Sigmoid colon (tissue), 7 donors: ENCODE measurements at regions of chr16 and their contacts with region 1.

Region 1: GRCh38 chr16:11851294-11852091 is at the start of gene RSL1D1:
- DNase-seq: peak; percentile 96
- H3K4me3 ChIP-seq: peak within 1 kb of the TSS; percentile 63 to 97 (median 94)
- H3K27ac ChIP-seq: peak within 1 kb of the TSS; percentile 82 to 94 (median 92)
- H3K4me1 ChIP-seq: peaks cover 0 to 45% (median 40%) of the 10 kb centered on the region in 4 donors
- H3K27me3 ChIP-seq: no peaks in the 10 kb centered on the region
- CTCF ChIP-seq: no peak
- EP300 ChIP-seq: peak in 1 of 4 donors; percentile 64
- POLR2A ChIP-seq: peak; percentile 83 to 87
- total RNA-seq, gene RSL1D1: 134 to 177 (median 148) TPM

Region 2: DNA sequence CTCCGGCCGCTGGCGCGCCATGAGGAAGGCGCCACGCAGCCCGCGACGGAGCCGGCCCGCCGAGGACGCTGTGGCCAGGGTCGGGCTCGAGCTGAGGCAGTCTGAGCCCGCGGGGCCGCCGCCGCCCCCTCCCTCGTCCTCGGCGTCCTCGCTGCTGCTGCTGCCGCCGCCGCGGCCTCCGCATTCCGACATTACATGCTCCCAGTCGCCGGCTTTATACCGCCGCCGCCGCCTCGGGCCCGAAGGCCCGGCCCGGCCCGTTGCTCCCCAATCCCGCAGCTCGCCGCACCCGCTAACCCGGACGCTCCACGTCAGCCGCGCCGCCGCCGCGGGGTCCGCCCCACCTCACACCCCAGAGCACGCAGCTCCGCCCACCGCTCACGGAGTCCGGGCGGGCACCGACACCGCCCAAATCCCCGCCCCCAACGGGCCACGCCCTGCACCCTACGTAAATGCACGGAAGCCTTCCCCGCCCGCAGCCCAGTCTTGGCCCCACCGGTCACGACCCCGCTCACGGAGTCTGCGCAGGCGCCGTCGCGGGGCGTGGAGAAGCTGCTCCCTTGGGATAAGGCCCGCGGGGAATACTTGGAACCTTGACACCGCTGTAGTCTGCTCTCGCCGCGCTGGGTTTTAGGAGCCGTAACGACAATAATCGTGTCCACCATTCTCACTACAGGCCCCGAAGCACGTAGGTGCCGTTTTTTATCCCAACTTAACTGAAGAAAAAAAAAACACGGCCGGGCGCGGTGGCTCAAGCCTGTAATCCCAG is 108.8 kb before region 1 on chr16 and contains the start of gene TXNDC11:
- intact Hi-C with region 1: loop called (anchors 2 kb)
- DNase-seq: peak; percentile 100
- H3K4me3 ChIP-seq: peak within 1 kb of the TSS; percentile 72 to 99 (median 92)
- H3K27ac ChIP-seq: peak within 1 kb of the TSS; percentile 96 to 100 (median 98)
- H3K4me1 ChIP-seq: peaks cover 0 to 41% (median 34%) of the 10 kb centered on the region in 4 donors
- H3K27me3 ChIP-seq: no peaks in the 10 kb centered on the region
- CTCF ChIP-seq: no peak
- EP300 ChIP-seq: peak in 2 of 4 donors; percentile 40 to 91
- POLR2A ChIP-seq: peak; percentile 65 to 74
- total RNA-seq, gene TXNDC11: 25.3 to 35.2 (median 28.8) TPM

Region 3: DNA sequence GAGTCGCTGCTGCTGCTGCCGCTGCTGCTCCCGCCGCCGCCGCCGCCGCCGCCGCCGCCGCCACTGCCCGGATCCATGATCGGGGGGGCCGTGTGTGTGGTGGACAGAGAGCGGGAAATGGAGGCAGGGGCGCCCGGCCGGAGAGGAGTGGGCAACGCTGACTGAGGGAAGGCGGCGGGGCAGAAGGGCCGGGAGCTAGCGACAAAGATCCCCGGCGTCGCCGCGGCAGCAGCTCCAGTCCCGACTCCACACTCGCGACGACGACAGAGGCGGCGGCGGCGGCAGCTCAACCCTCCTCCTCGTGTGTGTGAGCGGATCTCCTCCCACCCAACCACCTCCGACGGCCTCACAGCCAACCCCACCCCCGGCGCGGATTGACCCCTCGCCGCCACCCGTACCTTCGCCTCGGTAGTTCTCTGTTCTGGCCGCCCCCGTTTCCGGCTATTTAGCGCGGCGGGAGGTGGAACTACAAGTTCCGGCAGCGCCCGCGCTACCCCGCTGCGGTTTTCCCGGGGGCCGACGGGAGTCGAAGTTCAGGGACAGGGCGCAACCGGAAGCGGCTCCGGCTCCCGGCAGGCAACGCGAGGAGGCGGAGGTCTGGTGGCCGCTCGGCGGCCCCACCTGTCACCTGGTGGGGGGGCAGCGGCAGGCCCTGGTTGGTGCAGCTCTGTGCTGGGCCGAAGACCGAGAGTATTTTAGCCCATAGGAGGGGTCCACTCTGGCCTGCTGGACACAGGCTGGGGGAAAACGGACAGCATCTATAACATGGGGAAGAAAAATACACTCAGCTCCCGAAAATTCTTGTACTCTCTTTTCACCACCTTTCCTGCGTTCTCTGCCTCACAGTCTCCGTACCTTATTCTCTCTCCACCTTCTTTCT is 64.4 kb after region 1 on chr16 and contains the start of gene GSPT1:
- intact Hi-C with region 1: loop called (anchors 1 kb)
- DNase-seq: peak; percentile 99
- H3K4me3 ChIP-seq: peak within 1 kb of the TSS; percentile 71 to 98 (median 90)
- H3K27ac ChIP-seq: peak within 1 kb of the TSS; percentile 95 to 98 (median 97)
- H3K4me1 ChIP-seq: peaks cover 0 to 42% (median 41%) of the 10 kb centered on the region in 4 donors
- H3K27me3 ChIP-seq: no peaks in the 10 kb centered on the region
- CTCF ChIP-seq: peak in 2 of 4 experiments; percentile 15 to 35
- EP300 ChIP-seq: peak in 2 of 4 donors; percentile 53 to 79
- POLR2A ChIP-seq: peak; percentile 81 to 90
- total RNA-seq, gene GSPT1: 51.8 to 73.5 (median 52.3) TPM

Region 4: GRCh38 chr16:11977376-11978041 is 126.0 kb after region 1 on chr16:
- intact Hi-C with region 1: loop called (anchors 5 kb)
- DNase-seq: peak; percentile 80
- H3K4me3 ChIP-seq: peak overlapping the region; percentile 76 to 98 (median 92)
- H3K27ac ChIP-seq: peak overlapping the region; percentile 82 to 92 (median 90)
- H3K4me1 ChIP-seq: peaks cover 0 to 29% (median 23%) of the 10 kb centered on the region in 4 donors
- H3K27me3 ChIP-seq: no peaks in the 10 kb centered on the region
- CTCF ChIP-seq: no peak
- EP300 ChIP-seq: no peak
- POLR2A ChIP-seq: no peak

Region 5: DNA sequence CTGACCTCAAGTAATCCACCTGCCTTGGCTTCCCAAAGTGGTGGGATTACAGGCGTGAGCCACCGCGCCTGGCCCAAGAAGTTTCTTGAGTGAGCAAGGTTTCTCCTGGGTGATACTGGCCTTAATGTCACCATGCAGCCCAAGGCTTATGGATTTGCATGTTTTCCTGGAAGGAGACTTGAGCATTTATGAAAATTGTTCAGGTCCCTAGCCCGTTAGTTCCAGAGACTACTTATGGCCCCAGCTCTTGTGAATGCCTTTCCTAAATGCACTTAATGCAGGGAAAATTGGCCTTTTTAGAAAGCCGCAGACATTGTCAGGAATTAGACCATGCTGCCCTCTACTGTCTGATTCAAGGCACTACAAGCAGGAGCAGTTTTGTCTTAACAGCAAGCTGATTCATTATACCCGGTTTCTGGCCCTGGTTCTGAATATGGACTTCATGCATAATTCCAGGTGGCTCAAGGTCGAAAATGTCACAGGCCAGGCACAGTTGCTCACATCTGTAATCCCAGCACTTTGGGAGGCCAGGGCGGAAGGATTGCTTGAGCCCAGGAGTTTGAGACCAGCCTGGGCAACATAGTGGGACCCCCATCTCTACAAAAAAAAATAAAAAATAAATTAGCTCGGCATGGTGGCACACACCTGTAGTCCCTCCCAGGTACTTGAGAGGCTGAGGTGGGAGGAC is 216.4 kb after region 1 on chr16:
- intact Hi-C with region 1: loop called (anchors 10 kb)
- DNase-seq: no peak
- H3K4me3 ChIP-seq: no peak overlapping the region
- H3K27ac ChIP-seq: no peak overlapping the region
- H3K4me1 ChIP-seq: peaks cover 0 to 4% (median 1%) of the 10 kb centered on the region in 4 donors
- H3K27me3 ChIP-seq: no peaks in the 10 kb centered on the region
- CTCF ChIP-seq: peak; percentile 60 to 97 (median 92)
- EP300 ChIP-seq: no peak
- POLR2A ChIP-seq: no peak